GM12878 (cell line): ENCODE measurements at regions of chr9 and their contacts with region 1.

Region 1: DNA sequence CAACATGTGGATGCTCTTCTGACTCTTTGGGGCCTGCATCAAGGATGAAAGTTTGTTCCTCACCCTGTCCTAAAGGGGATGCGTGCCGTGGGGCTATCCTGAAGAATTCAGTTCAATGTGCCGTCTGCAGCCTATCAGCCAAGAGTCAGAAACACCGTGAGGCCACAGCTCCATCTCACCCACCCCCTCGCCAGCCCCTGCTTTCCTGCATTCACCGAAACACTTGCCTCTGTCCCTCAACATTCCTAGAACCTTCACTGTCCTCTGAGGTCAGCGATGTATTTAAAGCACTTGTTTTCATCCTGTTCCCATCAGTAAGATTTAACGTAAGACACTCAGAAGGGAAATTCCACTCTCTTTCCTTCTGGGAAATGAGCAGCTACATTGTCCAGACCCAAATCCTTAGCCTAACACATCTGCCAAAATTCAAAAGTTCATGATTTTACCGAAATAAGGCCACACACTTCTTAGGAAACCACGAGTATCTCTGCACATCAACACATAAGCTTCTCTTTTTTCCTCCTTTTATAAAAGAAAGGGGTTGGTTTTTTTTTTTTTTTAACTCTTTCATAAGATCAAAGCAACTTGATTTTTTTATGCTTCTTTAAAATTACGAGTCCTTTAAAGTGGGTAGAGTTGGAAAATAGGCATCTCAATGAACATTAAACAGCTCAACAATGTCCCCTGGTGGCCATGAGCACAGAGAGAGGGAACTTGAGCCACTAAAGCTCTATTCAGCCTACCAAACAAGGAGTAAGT is 100.7 kb downstream of the SUSD1 start:
- DNase-seq: peak; percentile 84
- ATAC-seq: peak; percentile 72
- H3K4me3 ChIP-seq: peak overlapping the region; percentile 4; the same call in 1 of the 2 replicates
- H3K27ac ChIP-seq: peak overlapping the region; percentile 73
- H3K4me1 ChIP-seq: peaks cover 66% of the 10 kb centered on the region
- H3K27me3 ChIP-seq: no peaks in the 10 kb centered on the region
- CTCF ChIP-seq: peak; percentile 91 to 97 (median 97)
- EP300 ChIP-seq: no peak
- POLR2A ChIP-seq: no peak
- RAD21 ChIP-seq: peak; percentile 99

Region 2: DNA sequence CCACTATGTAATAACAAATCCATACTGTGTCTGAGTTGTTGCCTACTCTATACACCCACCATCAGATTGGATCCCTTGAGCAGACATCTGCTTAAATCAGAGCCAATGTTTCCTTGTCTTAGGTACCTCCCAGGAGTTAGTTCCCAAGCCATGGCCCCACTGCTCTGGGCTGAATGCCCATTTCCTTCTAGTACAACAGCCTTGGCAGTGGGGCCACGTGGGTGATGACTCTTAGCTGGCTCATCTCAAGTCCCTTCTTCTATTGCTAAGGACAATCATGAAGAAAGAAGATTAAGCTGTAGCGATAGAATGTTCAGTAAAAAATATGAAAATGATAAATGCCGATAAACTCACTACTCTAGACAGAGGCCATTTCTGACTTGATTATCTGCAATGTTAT is 491.5 kb before region 1 on chr9:
- CTCF ChIA-PET with region 1: no interaction called
- POLR2A ChIA-PET with region 1: no interaction called
- RAD21 ChIA-PET with region 1: no interaction called
- SMC1A ChIA-PET with region 1: no interaction called
- in situ Hi-C with region 1: no loop called
- intact Hi-C with region 1: no loop called
- DNase-seq: no peak
- ATAC-seq: no peak
- H3K4me3 ChIP-seq: no peak overlapping the region
- H3K27ac ChIP-seq: no peak overlapping the region
- H3K4me1 ChIP-seq: no peaks in the 10 kb centered on the region
- H3K27me3 ChIP-seq: no peaks in the 10 kb centered on the region
- CTCF ChIP-seq: no peak
- EP300 ChIP-seq: no peak
- POLR2A ChIP-seq: no peak
- RAD21 ChIP-seq: no peak

Region 3: GRCh38 chr9:111828193-111828592 is 246.2 kb before region 1 on chr9:
- CTCF ChIA-PET with region 1: interaction called, 65 read pairs
- POLR2A ChIA-PET with region 1: interaction called, 7 read pairs
- RAD21 ChIA-PET with region 1: interaction called, 24 read pairs
- SMC1A ChIA-PET with region 1: interaction called, 15 read pairs
- in situ Hi-C with region 1: no loop called
- intact Hi-C with region 1: loop called (anchors 1 kb)
- DNase-seq: no peak
- ATAC-seq: peak; percentile 69
- H3K4me3 ChIP-seq: no peak overlapping the region
- H3K27ac ChIP-seq: no peak overlapping the region
- H3K4me1 ChIP-seq: no peaks in the 10 kb centered on the region
- H3K27me3 ChIP-seq: no peaks in the 10 kb centered on the region
- CTCF ChIP-seq: peak in 2 of 3 experiments; percentile 38 to 53; a peak in 4 of 6 replicates
- EP300 ChIP-seq: no peak
- POLR2A ChIP-seq: no peak
- RAD21 ChIP-seq: peak; percentile 58

Region 4: DNA sequence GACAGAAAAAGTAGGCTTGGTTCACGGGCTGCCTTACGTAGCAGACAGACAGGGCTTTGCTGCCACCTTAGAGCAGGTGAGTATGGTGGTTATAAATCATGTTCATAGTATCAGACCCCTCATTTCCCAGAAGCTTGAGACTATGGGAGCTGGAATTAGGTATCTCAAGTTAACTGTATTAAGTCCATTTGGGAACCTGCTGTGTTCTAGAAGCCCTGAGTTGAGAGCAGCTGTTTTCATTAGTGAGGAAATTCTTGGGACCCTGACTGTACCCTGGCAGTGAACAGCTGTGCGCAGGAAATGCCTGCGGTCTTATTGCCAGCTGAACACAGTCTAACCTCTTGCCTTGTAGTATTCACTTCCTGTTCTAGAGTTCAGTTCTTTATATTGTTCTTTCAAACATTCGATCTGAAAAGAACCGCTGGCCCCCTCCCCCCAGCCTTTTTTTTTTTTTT is 148.0 kb before region 1 on chr9:
- CTCF ChIA-PET with region 1: interaction called, 9 read pairs
- POLR2A ChIA-PET with region 1: interaction called, 4 read pairs
- RAD21 ChIA-PET with region 1: interaction called, 11 read pairs
- SMC1A ChIA-PET with region 1: interaction called, 3 read pairs
- in situ Hi-C with region 1: no loop called
- intact Hi-C with region 1: loop called (anchors 2 kb)
- DNase-seq: peak; percentile 86
- ATAC-seq: peak; percentile 98
- H3K4me3 ChIP-seq: no peak overlapping the region
- H3K27ac ChIP-seq: peak overlapping the region; percentile 75
- H3K4me1 ChIP-seq: peaks cover 13% of the 10 kb centered on the region; the same call in 1 of the 2 replicates
- H3K27me3 ChIP-seq: no peaks in the 10 kb centered on the region
- CTCF ChIP-seq: no peak
- EP300 ChIP-seq: peak; percentile 73 to 76; a peak in 3 of 4 replicates
- POLR2A ChIP-seq: no peak
- RAD21 ChIP-seq: no peak

Region 5: DNA sequence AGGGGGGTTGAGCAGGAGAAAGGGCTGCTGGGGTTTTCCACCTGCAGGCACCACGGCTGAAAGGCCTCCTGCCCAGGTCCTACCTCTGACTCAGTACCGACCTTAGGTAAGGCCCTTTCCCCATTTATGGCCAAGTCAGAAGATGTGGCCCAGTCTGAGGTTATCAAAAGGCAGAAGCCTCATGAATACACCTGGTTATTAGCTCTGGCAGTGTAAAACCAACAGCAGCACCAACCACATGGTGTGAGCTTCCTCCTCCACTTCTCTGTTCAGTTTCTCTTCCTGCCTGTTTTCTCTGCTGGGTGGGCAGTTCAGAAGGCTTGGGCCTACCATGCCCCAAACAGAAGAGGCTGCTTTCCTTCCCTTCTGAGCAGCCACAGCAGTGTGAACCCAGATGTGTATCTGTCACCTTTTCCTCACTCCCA is 90.9 kb before region 1 on chr9:
- CTCF ChIA-PET with region 1: interaction called, 46 read pairs
- POLR2A ChIA-PET with region 1: interaction called, 7 read pairs
- RAD21 ChIA-PET with region 1: interaction called, 47 read pairs
- SMC1A ChIA-PET with region 1: interaction called, 129 read pairs
- in situ Hi-C with region 1: no loop called
- intact Hi-C with region 1: loop called (anchors 2 kb)
- DNase-seq: peak; percentile 94
- ATAC-seq: peak; percentile 66
- H3K4me3 ChIP-seq: peak overlapping the region; percentile 7; the same call in 1 of the 2 replicates
- H3K27ac ChIP-seq: peak overlapping the region; percentile 99
- H3K4me1 ChIP-seq: peaks cover 62% of the 10 kb centered on the region
- H3K27me3 ChIP-seq: no peaks in the 10 kb centered on the region
- CTCF ChIP-seq: no peak
- EP300 ChIP-seq: peak; percentile 64 to 78; a peak in 2 of 4 replicates
- POLR2A ChIP-seq: peak; percentile 68
- RAD21 ChIP-seq: no peak

Region 6: DNA sequence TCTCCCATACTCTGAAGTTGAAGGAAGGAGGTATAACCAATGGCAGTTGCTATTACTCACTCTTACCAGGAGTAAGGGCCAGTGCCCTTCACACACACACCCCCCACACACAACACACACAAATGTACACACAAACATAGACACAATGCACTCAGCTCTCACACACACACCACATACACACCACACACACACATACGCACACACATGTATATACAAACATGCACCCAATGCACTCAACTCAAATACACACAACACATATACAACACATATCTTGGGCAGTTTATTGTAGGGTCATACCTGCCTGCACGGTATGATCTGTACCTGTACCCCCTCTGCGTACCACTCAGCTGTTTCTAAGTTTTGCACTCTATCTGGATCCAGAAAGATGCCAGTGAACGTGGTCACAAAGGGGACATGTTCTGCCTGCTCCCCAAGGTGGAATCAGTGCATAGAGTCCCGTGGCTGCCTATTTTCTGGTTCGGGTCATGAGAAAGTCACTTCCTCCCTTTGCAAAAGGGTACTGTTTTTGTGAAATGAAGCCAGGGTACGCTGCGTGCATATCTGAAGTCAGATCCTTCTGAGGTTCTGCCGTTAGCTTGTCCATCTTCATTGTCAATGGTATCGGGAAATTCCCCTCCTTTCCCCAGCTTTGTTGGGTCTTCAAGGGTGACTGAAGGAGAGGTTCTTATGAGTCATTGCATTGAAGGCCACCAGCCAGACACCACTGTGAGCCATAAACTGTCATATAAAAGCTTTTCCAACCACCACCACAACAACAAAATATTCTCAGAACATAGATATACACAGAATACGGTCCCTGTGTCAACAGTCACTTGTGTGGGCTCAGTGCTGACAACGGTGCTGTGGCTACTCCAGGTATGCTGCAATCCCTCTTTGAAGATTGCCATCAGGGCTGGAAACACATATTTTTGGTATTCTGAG is 45.9 kb before region 1 on chr9:
- CTCF ChIA-PET with region 1: interaction called, 74 read pairs
- POLR2A ChIA-PET with region 1: interaction called, 42 read pairs
- RAD21 ChIA-PET with region 1: interaction called, 339 read pairs
- SMC1A ChIA-PET with region 1: interaction called, 301 read pairs
- in situ Hi-C with region 1: no loop called
- intact Hi-C with region 1: loop called (anchors 1 kb)
- DNase-seq: peak; percentile 98
- ATAC-seq: peak; percentile 63
- H3K4me3 ChIP-seq: peak overlapping the region; percentile 63
- H3K27ac ChIP-seq: peak overlapping the region; percentile 97
- H3K4me1 ChIP-seq: peaks cover 38% of the 10 kb centered on the region
- H3K27me3 ChIP-seq: no peaks in the 10 kb centered on the region
- CTCF ChIP-seq: no peak
- EP300 ChIP-seq: peak; percentile 98 to 99
- POLR2A ChIP-seq: peak; percentile 84
- RAD21 ChIP-seq: peak; percentile 41

Region 7: DNA sequence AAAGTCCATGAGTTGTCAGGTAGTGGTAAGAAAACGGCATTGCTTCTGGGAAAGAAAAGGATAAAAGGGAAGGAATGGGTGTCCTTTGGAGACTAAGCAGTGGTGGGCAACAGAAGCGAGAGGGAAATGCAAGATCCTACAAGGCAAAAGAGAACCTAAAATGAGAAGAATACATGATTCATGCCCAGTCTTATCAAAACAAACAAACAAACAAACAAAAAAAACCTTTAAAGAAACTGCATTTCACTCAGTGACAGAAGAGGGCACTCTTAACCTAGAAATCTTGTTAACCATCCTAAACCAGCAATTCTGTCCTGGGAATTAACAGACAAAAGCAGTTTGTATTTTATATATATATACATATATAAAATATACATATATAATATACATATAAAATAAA is 12.2 kb after region 1 on chr9:
- CTCF ChIA-PET with region 1: interaction called, 12 read pairs
- POLR2A ChIA-PET with region 1: interaction called, 3 read pairs
- RAD21 ChIA-PET with region 1: interaction called, 7 read pairs
- SMC1A ChIA-PET with region 1: interaction called, 23 read pairs
- in situ Hi-C with region 1: no loop called
- intact Hi-C with region 1: no loop called
- DNase-seq: no peak
- ATAC-seq: peak; percentile 36; the same call in 1 of the 3 replicates
- H3K4me3 ChIP-seq: no peak overlapping the region
- H3K27ac ChIP-seq: no peak overlapping the region
- H3K4me1 ChIP-seq: no peaks in the 10 kb centered on the region; the same call in 1 of the 2 replicates
- H3K27me3 ChIP-seq: no peaks in the 10 kb centered on the region
- CTCF ChIP-seq: peak; percentile 47 to 59 (median 51); a peak in 5 of 6 replicates
- EP300 ChIP-seq: no peak
- POLR2A ChIP-seq: no peak
- RAD21 ChIP-seq: peak; percentile 83